Panc1 (cell line): ENCODE measurements at regions of chr5 and their contacts with region 1.

Region 1: GRCh38 chr5:73792687-73793320 is 166.8 kb downstream of the ARHGEF28 start:
- DNase-seq: peak; percentile 87
- ATAC-seq: peak; percentile 91
- H3K4me3 ChIP-seq: no peak overlapping the region
- H3K27ac ChIP-seq: no peak overlapping the region
- H3K4me1 ChIP-seq: no peaks in the 10 kb centered on the region
- H3K27me3 ChIP-seq: no peaks in the 10 kb centered on the region
- CTCF ChIP-seq: peak; percentile 98

Region 2: GRCh38 chr5:72394688-72395087 is 1398.1 kb before region 1 on chr5:
- CTCF ChIA-PET with region 1: no interaction called
- POLR2A ChIA-PET with region 1: no interaction called
- in situ Hi-C with region 1: no loop called
- intact Hi-C with region 1: no loop called
- DNase-seq: peak; percentile 30
- ATAC-seq: peak; percentile 63; the same call in 1 of the 2 replicates
- H3K4me3 ChIP-seq: no peak overlapping the region
- H3K27ac ChIP-seq: no peak overlapping the region
- H3K4me1 ChIP-seq: no peaks in the 10 kb centered on the region
- H3K27me3 ChIP-seq: no peaks in the 10 kb centered on the region
- CTCF ChIP-seq: peak; percentile 72

Region 3: DNA sequence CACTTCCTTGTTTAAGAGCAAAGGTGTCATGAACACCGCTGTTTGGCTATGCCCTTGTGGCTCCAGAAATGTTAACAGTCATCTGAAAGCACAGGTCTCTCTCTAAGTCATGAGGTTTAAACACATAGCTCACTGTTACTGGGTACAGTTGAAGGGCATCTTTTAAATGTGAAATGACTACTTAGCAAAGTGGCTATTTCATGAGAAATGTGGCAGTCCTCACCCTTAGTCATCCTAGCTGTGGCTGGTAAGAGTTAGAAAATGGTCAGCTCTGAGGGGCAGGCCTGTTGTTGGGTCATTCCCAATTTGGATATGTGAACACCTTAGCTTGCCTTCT is 696.6 kb before region 1 on chr5:
- CTCF ChIA-PET with region 1: interaction called, 11 read pairs
- POLR2A ChIA-PET with region 1: no interaction called
- in situ Hi-C with region 1: no loop called
- intact Hi-C with region 1: no loop called
- DNase-seq: no peak
- ATAC-seq: no peak
- H3K4me3 ChIP-seq: no peak overlapping the region
- H3K27ac ChIP-seq: no peak overlapping the region
- H3K4me1 ChIP-seq: no peaks in the 10 kb centered on the region
- H3K27me3 ChIP-seq: no peaks in the 10 kb centered on the region
- CTCF ChIP-seq: no peak

Region 4: DNA sequence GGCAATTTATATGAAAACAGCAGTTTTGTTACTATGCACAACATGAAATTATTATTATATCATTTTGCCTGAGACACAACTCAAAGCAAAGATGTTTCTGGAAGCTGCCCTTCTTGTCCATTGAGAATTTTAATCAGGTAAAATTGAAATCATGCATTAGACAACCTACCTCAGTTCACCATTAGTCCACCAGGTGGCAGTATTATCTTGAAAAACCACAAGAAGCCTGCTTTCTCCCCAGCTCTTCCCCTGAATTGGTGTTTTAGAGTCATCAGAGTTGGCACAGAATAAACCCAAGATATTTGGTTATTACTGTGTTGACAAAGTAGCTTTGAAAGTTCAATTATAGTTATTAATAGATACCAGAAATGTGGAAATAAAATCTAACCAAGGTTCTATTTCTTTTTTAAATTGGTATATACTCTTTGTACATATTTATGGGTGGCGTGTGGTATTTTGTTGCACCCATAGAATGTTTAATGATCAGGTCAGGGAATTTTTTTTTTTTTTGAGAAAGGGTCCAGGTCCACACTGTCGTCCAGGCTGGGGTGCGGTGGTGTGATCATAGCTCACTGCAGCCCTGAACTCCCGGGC is 201.6 kb before region 1 on chr5:
- CTCF ChIA-PET with region 1: interaction called, 25 read pairs
- POLR2A ChIA-PET with region 1: no interaction called
- in situ Hi-C with region 1: no loop called
- intact Hi-C with region 1: loop called (anchors 1 kb)
- DNase-seq: peak; percentile 83
- ATAC-seq: peak; percentile 85
- H3K4me3 ChIP-seq: no peak overlapping the region
- H3K27ac ChIP-seq: no peak overlapping the region
- H3K4me1 ChIP-seq: no peaks in the 10 kb centered on the region
- H3K27me3 ChIP-seq: no peaks in the 10 kb centered on the region
- CTCF ChIP-seq: peak; percentile 76; the same call in 1 of the 2 replicates

Region 5: DNA sequence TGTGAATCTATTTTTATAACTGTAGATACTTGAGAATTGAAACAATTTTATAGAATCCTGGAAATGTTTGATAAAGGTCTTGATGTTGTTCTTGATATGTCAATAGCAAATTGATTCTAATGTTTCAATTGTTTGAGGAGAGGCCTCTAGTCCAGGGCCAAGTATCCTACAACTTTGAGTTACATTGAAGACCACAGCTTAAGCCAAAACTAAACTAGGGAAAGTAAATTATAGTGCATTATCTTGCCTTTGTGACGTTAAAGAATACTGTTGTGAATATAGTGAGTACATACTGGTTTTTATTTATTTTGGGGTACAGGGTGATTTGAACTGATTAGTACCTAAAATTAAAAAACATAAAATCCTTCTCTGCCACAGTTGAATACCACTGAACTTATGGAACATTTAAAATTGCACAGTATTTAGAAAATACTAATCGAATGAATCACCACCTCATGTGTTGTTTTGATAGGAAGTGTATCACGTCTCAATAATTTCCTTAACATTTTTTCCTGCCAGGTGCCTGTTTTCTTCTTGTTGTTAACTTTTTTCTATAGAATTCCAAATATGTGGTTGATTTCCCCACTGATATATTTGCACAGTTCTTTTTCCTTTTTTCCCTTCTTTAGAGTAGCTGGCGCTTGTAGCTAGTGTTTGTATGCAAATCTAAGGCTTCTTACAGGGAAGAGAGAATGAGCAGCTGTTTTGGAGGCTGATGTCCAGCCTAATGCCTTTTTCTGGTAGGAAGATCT is 154.3 kb before region 1 on chr5:
- CTCF ChIA-PET with region 1: interaction called, 13 read pairs
- POLR2A ChIA-PET with region 1: no interaction called
- in situ Hi-C with region 1: no loop called
- intact Hi-C with region 1: no loop called
- DNase-seq: peak; percentile 83
- ATAC-seq: peak; percentile 74
- H3K4me3 ChIP-seq: peak overlapping the region; percentile 2 to 32; a peak in 3 of 4 replicates
- H3K27ac ChIP-seq: peak overlapping the region; percentile 85
- H3K4me1 ChIP-seq: peaks cover 83% of the 10 kb centered on the region
- H3K27me3 ChIP-seq: no peaks in the 10 kb centered on the region
- CTCF ChIP-seq: no peak

Region 6: GRCh38 chr5:73899055-73899454 is 106.3 kb after region 1 on chr5:
- CTCF ChIA-PET with region 1: no interaction called
- POLR2A ChIA-PET with region 1: no interaction called
- in situ Hi-C with region 1: no loop called
- intact Hi-C with region 1: no loop called
- DNase-seq: no peak
- ATAC-seq: no peak
- H3K4me3 ChIP-seq: no peak overlapping the region
- H3K27ac ChIP-seq: no peak overlapping the region
- H3K4me1 ChIP-seq: peaks cover 11% of the 10 kb centered on the region
- H3K27me3 ChIP-seq: no peaks in the 10 kb centered on the region
- CTCF ChIP-seq: no peak

Region 7: DNA sequence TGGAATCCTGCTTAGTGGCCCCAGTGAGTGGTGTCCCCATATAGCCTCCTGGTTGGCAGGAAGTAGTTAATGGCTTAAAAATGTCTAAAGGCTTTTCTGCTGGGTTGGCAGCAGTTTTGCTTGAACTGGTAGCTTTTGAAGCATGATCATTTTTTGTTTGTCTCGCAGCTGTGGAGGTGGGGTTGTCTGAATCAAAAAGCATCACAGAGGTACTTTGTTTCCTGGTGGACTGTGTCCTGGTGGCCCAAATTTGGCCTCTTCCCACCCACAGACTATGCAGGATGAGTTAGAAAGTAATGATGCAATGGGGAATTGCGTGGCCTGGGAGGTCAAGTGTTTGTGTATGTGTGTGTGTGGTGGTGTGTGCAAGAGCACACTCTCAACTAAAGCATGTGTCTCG is 155.9 kb after region 1 on chr5:
- CTCF ChIA-PET with region 1: no interaction called
- POLR2A ChIA-PET with region 1: no interaction called
- in situ Hi-C with region 1: no loop called
- intact Hi-C with region 1: no loop called
- DNase-seq: no peak
- ATAC-seq: no peak
- H3K4me3 ChIP-seq: no peak overlapping the region
- H3K27ac ChIP-seq: no peak overlapping the region
- H3K4me1 ChIP-seq: no peaks in the 10 kb centered on the region
- H3K27me3 ChIP-seq: no peaks in the 10 kb centered on the region; the same call in 1 of the 2 replicates
- CTCF ChIP-seq: no peak